ENCODE measurements at regions of chr17 and their contacts with region 1.

Region 1: GRCh38 chr17:75059369-75060345 is 12.6 kb downstream of the KCTD2 start:
- DNase-seq: peak in 2 of 7 donors; percentile 25 to 35
- H3K4me3 ChIP-seq: no peak overlapping the region
- H3K27ac ChIP-seq: no peak overlapping the region
- H3K4me1 ChIP-seq: no peaks in the 10 kb centered on the region
- H3K27me3 ChIP-seq: no peaks in the 10 kb centered on the region
- CTCF ChIP-seq: peak in 5 of 6 experiments; percentile 11 to 48 (median 38)
- POLR2A ChIP-seq: no peak

Region 2: GRCh38 chr17:75006653-75007052 is 53.0 kb before region 1 on chr17:
- intact Hi-C with region 1: loop called in 1 of 2 experiments (anchors 10 kb)
- DNase-seq: peak in 4 of 7 donors; percentile 31 to 55 (median 45)
- H3K4me3 ChIP-seq: no peak overlapping the region
- H3K27ac ChIP-seq: no peak overlapping the region
- H3K4me1 ChIP-seq: peaks cover 0 to 4% of the 10 kb centered on the region in 2 donors
- H3K27me3 ChIP-seq: no peaks in the 10 kb centered on the region
- CTCF ChIP-seq: peak in 5 of 6 experiments; percentile 21 to 41 (median 34)
- POLR2A ChIP-seq: no peak

Region 3: GRCh38 chr17:75046582-75047289 is 12.9 kb before region 1 on chr17 and contains the starts of genes ATP5PD and KCTD2:
- intact Hi-C with region 1: no loop called
- DNase-seq: peak; percentile 96 to 98 (median 97)
- H3K4me3 ChIP-seq: peak within 1 kb of the TSS; percentile 59 to 97 (median 82)
- H3K27ac ChIP-seq: peak within 1 kb of the TSS; percentile 66 to 98 (median 95)
- H3K4me1 ChIP-seq: peaks cover 14 to 24% of the 10 kb centered on the region in 2 donors
- H3K27me3 ChIP-seq: no peaks in the 10 kb centered on the region
- CTCF ChIP-seq: peak in 1 of 6 experiments; percentile 8
- POLR2A ChIP-seq: peak; percentile 79 to 94
- total RNA-seq, gene ATP5PD: 215 to 452 (median 283) TPM
- total RNA-seq, gene KCTD2: 38.2 to 49.2 (median 41.0) TPM

Region 4: DNA sequence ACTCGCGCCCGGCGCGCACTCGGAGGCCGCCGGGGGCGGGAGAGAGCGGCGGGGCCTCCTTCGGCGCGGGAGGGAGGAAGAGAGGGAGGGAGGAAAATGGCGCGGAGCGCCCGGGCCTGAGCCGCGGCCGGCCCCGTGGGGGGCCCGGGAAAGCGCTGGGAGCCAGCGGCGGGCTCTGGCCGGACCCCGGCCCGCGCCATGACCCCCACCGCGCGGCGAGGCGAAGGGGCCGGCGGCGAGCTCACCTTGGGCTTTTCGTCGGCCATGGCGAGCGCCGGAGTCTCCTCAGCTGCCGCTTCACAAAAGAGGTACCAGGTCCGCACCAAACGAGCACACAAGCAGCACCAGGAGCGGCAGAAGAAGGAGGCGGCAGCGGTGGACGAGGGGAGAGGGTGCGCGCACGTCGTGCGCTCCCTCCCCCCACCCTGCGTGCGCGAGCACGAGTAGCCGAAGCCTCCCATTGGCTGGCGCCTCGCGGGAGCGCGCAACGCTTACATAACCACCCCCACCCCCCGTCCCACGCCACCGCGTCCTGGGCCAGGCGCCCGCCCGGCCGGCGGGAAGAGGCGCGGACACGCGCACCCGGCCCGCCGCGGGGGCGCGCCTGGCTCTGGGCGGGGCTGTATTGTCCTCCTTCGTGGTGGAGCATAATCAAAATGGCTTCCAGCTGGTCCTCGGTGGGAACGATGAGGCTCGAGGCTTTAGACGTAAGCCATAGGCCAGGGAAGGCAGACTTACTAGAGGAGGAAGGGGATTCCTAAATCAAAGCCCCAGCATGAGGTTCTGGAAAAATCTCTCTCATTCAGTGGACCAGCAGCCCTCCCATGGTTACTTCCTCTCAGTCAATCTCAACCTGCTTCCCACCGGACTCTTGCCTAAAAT is 123.2 kb after region 1 on chr17 and contains the start of gene SUMO2:
- intact Hi-C with region 1: loop called in 1 of 2 experiments (anchors 10 kb)
- DNase-seq: peak; percentile 94 to 97 (median 95)
- H3K4me3 ChIP-seq: peak within 1 kb of the TSS; percentile 95 to 100 (median 96)
- H3K27ac ChIP-seq: peak within 1 kb of the TSS; percentile 91 to 100 (median 99)
- H3K4me1 ChIP-seq: peaks cover 0 to 27% of the 10 kb centered on the region in 2 donors
- H3K27me3 ChIP-seq: no peaks in the 10 kb centered on the region
- CTCF ChIP-seq: peak in 4 of 6 experiments; percentile 23 to 54 (median 49)
- POLR2A ChIP-seq: peak; percentile 77 to 87
- total RNA-seq, gene SUMO2: 65.2 to 371 (median 265) TPM

Region 5: DNA sequence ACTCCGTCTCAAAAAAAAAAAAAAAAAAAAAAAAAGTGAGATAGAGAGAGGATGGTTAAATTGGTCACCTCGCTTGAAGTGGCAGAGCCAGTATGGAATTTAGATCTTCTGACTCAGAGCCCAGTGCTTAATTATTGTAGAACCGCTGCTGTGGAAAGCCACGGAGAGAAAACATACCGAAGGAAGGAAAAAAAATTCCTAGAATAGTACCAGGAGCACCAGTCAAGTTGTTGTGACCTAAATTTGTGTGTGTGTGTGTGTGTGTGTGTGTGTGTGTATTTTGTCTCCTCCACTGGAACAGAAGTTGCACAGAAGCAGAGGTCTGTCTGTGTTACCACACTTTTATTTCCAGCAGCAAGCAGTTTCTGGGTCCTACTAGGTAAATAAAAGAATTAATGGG is 135.2 kb after region 1 on chr17:
- intact Hi-C with region 1: no loop called
- DNase-seq: no peak
- H3K4me3 ChIP-seq: no peak overlapping the region
- H3K27ac ChIP-seq: no peak overlapping the region
- H3K4me1 ChIP-seq: no peaks in the 10 kb centered on the region
- H3K27me3 ChIP-seq: no peaks in the 10 kb centered on the region
- CTCF ChIP-seq: no peak
- POLR2A ChIP-seq: no peak

Measured in adrenal gland (tissue), 19 donors.